ENCODE measurements at regions of chrX and their contacts with region 1.

Region 1: GRCh38 chrX:40153335-40154249 is 55.8 kb upstream of the BCOR start:
- DNase-seq: peak; percentile 86

Region 2: GRCh38 chrX:39730662-39731397 is 422.8 kb before region 1 on chrX:
- intact Hi-C with region 1: loop called in 1 of 2 experiments (anchors 10 kb)
- DNase-seq: peak; percentile 92

Region 3: DNA sequence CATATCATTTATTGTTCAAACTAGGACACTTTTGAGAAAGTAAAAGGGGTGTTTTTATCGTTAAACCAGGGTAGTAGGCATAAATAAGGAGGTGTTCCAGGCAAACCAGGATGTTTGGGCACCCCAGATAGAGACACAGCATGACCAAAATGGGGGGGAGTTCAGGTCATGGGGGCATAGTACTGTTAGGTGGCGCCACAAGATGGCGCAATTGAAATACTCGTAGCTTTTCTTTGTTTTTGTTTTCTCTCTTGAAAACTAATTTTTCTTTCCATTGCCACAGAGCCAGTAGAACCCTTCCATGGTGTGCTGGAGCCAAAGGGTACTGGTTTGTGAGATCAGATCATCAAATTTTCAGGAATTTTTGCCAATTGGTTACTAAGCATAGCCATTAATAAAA is 339.2 kb before region 1 on chrX:
- intact Hi-C with region 1: loop called in 1 of 2 experiments (anchors 10 kb)
- DNase-seq: no peak

Region 4: GRCh38 chrX:40013266-40014195 is 140.1 kb before region 1 on chrX:
- intact Hi-C with region 1: loop called in 1 of 2 experiments (anchors 10 kb)
- DNase-seq: peak; percentile 92

Region 5: DNA sequence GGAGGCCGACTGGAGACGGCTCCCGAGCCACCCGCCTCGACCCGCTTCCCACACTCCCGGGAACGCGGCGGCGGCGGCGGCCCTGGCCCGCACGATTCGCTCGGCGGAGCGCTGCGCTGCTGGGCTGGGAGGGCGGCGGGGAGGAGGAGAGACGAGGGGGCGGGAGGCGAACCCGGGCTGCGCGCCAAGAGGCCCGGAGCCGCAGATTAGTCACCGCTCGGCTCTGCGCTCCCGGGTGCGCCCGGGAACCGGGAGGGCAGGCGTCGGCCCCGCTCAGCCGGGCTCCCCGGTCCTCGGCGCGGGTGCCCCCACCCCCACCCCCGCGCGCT is 44.7 kb before region 1 on chrX:
- intact Hi-C with region 1: loop called (anchors 5 to 10 kb)
- DNase-seq: peak; percentile 92

Region 6: GRCh38 chrX:40189637-40190036 is 36.0 kb after region 1 on chrX:
- intact Hi-C with region 1: no loop called
- DNase-seq: no peak

Region 7: DNA sequence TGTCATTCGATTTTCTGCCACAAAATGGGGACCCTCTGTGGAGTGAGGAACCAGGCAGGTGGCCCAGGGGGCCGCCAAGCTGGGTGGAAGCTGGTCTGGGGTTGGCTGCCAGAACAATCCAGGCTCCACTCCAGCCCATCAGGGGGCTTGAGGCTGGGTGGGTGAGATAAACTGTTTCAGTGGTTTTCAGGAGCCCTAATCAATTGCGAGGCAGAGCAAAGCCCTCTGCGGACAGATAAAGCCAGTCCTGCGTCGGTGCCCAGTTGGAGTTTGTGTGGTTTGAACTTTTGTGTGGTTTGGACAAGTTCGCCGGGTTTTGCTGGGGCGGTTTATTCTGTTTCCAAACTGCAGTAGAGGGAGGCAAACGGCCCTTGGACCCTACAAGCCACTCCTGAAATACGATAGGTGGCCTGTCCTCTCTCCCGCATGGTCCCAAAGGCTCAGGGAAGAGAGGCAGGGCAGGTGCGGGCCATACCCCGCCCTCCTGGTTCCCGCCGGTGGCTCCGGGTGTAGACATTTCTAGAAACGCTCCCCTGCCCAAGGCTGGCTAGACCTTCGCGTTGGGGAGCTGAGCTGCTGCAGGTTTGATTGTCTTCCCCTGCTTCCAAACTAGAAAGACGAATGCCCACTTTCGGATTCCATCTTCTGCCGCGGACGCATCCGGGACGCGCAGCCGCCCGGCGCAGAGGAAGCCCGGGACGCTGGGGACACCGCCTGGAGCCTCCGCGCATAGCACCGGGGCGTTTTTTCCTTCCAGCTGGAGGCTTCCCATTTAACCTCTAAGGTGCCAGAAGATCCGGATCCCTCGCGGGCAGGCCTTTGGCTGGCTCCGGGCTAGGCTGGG is 113.1 kb after region 1 on chrX:
- intact Hi-C with region 1: loop called in 1 of 2 experiments (anchors 10 kb)
- DNase-seq: peak; percentile 87

Measured in posterior vena cava (tissue), 2 donors.